ENCODE measurements at regions of chr7 and their contacts with region 1.

Region 1: GRCh38 chr7:37234928-37235327 is 213.7 kb downstream of the ELMO1 start:
- DNase-seq: peak; percentile 42
- H3K4me3 Mint-ChIP-seq: no peak overlapping the region
- H3K27ac Mint-ChIP-seq: no peak overlapping the region
- H3K4me1 Mint-ChIP-seq: peaks cover 19% of the 10 kb centered on the region
- H3K27me3 Mint-ChIP-seq: peaks cover 30% of the 10 kb centered on the region
- CTCF ChIP-seq: peak; percentile 88

Region 2: GRCh38 chr7:37208528-37208927 is 26.4 kb before region 1 on chr7:
- CTCF ChIA-PET with region 1: interaction called, 15 read pairs
- POLR2A ChIA-PET with region 1: no interaction called
- intact Hi-C with region 1: no loop called
- DNase-seq: peak; percentile 87
- H3K4me3 Mint-ChIP-seq: no peak overlapping the region
- H3K27ac Mint-ChIP-seq: no peak overlapping the region
- H3K4me1 Mint-ChIP-seq: peaks cover 16% of the 10 kb centered on the region
- H3K27me3 Mint-ChIP-seq: no peaks in the 10 kb centered on the region
- CTCF ChIP-seq: peak; percentile 49

Region 3: DNA sequence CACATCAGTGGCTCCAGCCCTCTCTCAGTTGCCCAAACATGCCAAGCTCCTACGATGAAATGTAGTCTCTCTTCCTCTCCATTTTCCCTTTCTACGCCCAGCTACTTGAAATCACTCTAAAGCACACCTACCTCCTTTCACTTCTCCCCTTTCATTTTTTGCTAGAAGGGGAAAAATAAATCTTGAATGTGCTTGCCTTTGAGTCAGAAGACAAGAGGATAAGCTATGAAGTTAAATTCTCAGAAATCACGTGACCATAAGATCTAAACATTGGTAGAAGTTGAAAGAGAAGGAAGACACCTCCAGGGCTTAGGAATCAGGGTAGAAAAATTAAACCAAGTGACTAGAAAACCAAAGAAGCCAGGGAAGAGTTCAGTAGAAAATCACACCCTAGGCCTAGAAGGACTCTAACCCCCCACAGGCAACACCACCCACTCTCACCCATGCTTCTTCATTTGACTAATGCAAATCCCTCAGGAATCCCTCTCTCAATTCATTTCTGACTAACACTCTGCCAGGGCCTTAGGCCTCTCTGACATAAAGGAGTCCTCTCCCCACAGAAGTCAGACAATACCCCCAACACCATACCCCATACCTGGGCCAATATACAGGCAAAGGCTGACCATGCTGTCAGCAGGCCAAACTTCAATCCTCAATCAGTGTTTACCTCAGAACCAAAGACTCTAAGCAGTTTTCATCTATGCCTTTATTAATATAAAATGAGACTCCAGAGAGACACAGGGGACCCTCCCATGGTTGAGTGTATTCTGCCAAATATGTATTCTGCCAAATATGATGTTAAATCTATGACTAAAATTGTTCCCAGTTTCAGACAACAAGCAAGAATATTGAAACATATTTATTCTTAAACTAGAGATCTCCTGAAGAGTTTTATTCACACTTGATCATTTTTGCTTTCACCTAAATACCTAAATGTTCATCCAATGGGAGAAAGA is 128.9 kb after region 1 on chr7:
- CTCF ChIA-PET with region 1: no interaction called
- POLR2A ChIA-PET with region 1: no interaction called
- intact Hi-C with region 1: no loop called
- DNase-seq: no peak
- H3K4me3 Mint-ChIP-seq: no peak overlapping the region
- H3K27ac Mint-ChIP-seq: no peak overlapping the region
- H3K4me1 Mint-ChIP-seq: no peaks in the 10 kb centered on the region
- H3K27me3 Mint-ChIP-seq: no peaks in the 10 kb centered on the region
- CTCF ChIP-seq: no peak

Region 4: GRCh38 chr7:37495574-37496184 is 260.8 kb after region 1 on chr7:
- CTCF ChIA-PET with region 1: interaction called, 109 read pairs
- POLR2A ChIA-PET with region 1: no interaction called
- intact Hi-C with region 1: loop called (anchors 1 kb)
- DNase-seq: peak; percentile 59
- H3K4me3 Mint-ChIP-seq: no peak overlapping the region
- H3K27ac Mint-ChIP-seq: peak overlapping the region; percentile 27
- H3K4me1 Mint-ChIP-seq: no peaks in the 10 kb centered on the region
- H3K27me3 Mint-ChIP-seq: no peaks in the 10 kb centered on the region
- CTCF ChIP-seq: peak; percentile 56

Region 5: DNA sequence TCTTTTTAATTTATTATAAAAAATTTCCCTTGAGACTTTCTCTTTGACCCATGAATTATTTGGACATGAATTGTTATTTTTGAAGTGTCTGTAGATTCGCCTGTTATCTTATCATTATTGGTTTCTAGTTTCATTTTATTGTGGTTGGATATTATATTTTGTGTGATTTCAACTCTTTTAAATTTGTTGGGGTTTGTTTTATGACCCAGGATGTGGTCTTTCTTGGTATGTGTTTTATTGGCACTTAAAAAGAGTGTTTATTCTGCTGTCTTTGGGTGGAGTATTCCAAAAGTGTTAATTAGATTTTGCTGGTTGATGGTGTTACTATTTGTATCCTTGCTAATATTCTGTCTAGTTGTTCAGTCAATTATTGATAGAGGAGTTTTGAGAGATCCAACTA is 398.1 kb after region 1 on chr7:
- CTCF ChIA-PET with region 1: no interaction called
- POLR2A ChIA-PET with region 1: no interaction called
- intact Hi-C with region 1: loop called (anchors 5 kb)
- DNase-seq: no peak
- H3K4me3 Mint-ChIP-seq: no peak overlapping the region
- H3K27ac Mint-ChIP-seq: no peak overlapping the region
- H3K4me1 Mint-ChIP-seq: peaks cover 8% of the 10 kb centered on the region
- H3K27me3 Mint-ChIP-seq: no peaks in the 10 kb centered on the region
- CTCF ChIP-seq: no peak

Region 6: GRCh38 chr7:37732253-37732652 is 497.3 kb after region 1 on chr7:
- CTCF ChIA-PET with region 1: interaction called, 18 read pairs
- POLR2A ChIA-PET with region 1: interaction called, 6 read pairs
- intact Hi-C with region 1: loop called (anchors 10 kb)
- DNase-seq: peak; percentile 97
- H3K4me3 Mint-ChIP-seq: peak overlapping the region; percentile 46
- H3K27ac Mint-ChIP-seq: peak overlapping the region; percentile 82
- H3K4me1 Mint-ChIP-seq: peaks cover 42% of the 10 kb centered on the region
- H3K27me3 Mint-ChIP-seq: no peaks in the 10 kb centered on the region
- CTCF ChIP-seq: peak; percentile 61

Region 7: DNA sequence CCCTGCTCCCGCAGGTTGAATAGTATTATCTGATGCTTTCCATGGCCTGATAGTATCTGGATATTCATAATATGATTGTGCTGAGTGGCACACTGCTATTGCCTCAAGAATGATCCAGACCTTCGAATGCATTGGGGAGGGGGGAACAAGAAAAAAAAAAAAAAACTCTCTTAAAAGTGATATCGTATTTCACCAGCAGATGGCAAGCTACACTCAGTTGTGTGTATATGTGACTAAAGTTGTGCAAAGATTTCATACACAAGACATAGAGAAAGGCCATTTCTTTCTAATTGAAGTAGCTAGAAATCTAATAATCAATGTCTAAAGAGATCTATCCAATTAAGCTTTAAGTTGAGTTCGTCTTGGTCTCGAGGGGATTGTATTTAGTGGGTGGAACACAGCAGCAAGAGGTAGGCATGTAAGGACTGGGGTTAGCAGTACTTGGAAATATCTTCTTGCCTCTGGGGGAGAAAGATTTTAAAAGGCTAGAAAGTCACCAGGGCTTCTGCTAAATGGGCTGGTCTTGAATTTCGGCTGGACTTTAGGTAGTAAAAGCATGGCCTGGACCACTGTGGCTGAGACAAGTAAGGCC is 666.4 kb after region 1 on chr7:
- CTCF ChIA-PET with region 1: interaction called, 13 read pairs
- POLR2A ChIA-PET with region 1: no interaction called
- intact Hi-C with region 1: no loop called
- DNase-seq: peak; percentile 53
- H3K4me3 Mint-ChIP-seq: no peak overlapping the region
- H3K27ac Mint-ChIP-seq: no peak overlapping the region
- H3K4me1 Mint-ChIP-seq: no peaks in the 10 kb centered on the region
- H3K27me3 Mint-ChIP-seq: peaks cover 35% of the 10 kb centered on the region
- CTCF ChIP-seq: peak; percentile 44

Measured in MCF 10A (cell line).